ENCODE measurements at regions of chr5 and their contacts with region 1.

Region 1: DNA sequence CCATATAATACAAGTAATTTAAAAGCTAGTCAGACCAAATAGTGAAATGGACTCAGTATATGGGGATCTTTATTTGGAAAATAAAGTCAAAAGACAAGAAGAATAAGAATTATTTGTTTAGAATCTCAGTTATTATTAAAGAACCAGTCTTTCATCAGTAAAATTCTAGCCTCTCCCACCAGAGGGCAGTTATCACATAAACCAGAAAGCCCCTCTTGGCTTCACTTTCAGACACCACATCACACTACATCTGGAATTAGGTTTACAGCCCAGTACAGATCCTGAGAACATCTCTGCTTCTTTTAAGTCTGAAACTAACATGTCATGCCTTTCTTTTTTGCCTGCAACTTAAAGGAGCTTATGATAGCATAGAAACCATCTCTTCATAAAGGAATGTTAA is 12.2 kb upstream of the HSPB3 start:
- DNase-seq: peak; percentile 28
- ATAC-seq: no peak
- H3K4me3 ChIP-seq: no peak overlapping the region
- H3K4me3 Mint-ChIP-seq: no peak overlapping the region
- H3K27ac ChIP-seq: no peak overlapping the region
- H3K27ac Mint-ChIP-seq: no peak overlapping the region
- H3K4me1 ChIP-seq: peaks cover 14 to 17% of the 10 kb centered on the region in 2 donors
- H3K4me1 Mint-ChIP-seq: peaks cover 23% of the 10 kb centered on the region
- H3K27me3 ChIP-seq: no peaks in the 10 kb centered on the region
- H3K27me3 Mint-ChIP-seq: no peaks in the 10 kb centered on the region
- CTCF ChIP-seq: peak; percentile 51

Region 2: DNA sequence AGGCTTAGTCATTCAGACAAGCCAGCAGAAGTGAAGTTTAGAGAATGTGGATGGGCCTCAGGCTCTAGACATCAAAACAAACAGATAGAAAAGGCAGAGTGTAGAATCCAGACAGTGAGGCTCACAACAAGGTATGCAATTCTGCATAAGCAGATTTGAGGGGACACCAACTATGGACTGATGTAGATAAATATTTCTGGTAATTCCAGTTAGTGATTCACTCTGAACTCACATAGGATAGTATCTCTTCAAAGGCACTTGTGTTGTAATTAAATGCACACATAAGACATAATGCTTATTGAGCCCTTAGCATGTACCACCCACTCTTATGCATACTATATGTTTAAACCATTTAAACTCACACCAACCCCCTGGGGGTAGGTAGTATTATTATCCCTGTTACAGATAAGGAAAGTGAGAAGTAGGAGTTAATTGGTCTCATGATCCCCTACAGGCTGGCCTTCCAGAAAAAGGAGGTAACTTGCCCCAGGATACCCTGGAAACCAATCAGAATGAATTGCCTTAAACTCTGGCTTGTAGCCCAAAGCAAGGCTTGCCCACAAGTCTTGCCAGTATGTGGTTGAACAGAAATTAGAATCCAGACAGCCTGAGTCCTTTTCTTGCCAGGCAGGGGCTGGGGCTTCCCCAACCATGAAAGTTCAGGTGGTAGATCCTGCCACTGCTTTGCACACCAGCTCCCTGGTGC is 27.2 kb before region 1 on chr5:
- CTCF ChIA-PET with region 1: interaction called, 10 read pairs
- POLR2A ChIA-PET with region 1: no interaction called
- intact Hi-C with region 1: no loop called
- DNase-seq: no peak
- ATAC-seq: no peak
- H3K4me3 ChIP-seq: no peak overlapping the region
- H3K4me3 Mint-ChIP-seq: no peak overlapping the region
- H3K27ac ChIP-seq: no peak overlapping the region
- H3K27ac Mint-ChIP-seq: no peak overlapping the region
- H3K4me1 ChIP-seq: no peaks in the 10 kb centered on the region
- H3K4me1 Mint-ChIP-seq: no peaks in the 10 kb centered on the region
- H3K27me3 ChIP-seq: peaks cover 0 to 4% (median 0%) of the 10 kb centered on the region in 4 experiments
- H3K27me3 Mint-ChIP-seq: peaks cover 27% of the 10 kb centered on the region
- CTCF ChIP-seq: no peak

Measured in B cell (primary cell).